ENCODE measurements at regions of chr16 and their contacts with region 1.

Region 1: DNA sequence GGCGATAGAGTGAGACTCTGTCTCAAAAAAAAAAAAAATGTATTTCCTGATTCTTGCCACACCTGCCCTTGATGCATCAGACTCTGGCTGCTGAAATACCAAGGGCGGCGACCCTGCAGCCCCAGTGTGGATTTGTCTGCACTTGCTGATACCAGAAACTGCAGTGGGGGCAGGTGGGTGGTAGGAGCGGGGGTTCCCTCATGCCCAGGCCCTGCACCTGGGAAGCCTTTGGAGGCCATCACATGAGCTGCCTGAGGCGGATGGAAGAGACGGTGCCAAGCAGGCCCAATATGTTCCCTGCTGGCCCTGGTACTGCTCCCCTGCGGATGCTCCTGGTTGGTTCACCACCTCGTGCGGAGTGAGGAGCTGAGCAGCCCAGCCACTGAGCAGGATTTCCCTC is 50.6 kb downstream of the MARF1 start:
- DNase-seq: no peak
- ATAC-seq: no peak
- H3K4me3 ChIP-seq: no peak overlapping the region
- H3K27ac ChIP-seq: peak overlapping the region; percentile 32
- H3K4me1 ChIP-seq: peaks cover 16% of the 10 kb centered on the region
- H3K27me3 ChIP-seq: no peaks in the 10 kb centered on the region
- CTCF ChIP-seq: no peak

Region 2: DNA sequence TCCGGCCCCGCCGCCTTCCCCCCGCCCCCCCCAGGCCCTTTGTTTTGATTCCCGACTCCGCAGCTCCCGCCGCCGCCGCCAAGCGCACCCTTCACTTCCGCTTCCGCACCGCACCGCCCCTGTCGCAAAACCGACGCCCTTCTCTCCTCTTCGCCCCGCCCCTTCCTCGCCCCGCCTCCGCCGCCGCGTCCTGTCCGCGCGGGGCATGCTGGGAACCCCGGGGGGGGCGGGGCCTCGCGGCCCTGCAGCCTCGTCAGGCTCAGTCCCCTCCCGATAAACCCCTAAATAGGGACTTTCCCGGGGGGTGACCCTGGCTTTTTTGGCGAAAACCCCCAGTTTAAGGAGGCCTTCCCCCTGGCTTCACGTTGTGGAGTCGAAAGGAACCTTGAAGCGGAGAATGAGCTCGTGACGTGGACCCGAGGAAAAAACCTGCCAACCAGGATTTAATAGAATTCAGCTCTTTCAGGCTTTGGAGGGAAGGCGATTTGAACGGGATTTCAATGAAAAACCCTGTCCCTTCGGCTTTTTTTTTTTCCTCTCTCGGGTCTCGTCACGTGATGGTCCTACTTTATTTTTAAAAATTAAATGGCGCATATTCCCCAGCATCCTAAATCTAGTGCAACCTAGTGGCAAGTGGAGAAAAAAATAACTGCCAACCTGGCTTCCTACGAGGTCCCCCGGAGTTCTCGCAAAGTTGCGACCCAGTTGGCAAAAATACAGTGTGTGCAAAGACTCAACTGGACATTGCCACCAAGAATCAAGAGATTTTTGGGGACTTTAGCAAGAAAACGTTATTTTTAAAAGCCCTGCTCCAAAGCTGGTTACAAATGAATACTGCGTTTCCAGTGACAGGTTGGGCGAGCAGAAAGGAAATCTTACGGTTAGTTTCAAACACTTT is 51.0 kb after region 1 on chr16 and contains the start of gene MARF1:
- intact Hi-C with region 1: loop called in 1 of 2 experiments (anchors 10 kb)
- DNase-seq: peak; percentile 99 to 100
- ATAC-seq: peak; percentile 96 to 99 (median 96)
- H3K4me3 ChIP-seq: peak within 1 kb of the TSS; percentile 87
- H3K27ac ChIP-seq: peak within 1 kb of the TSS; percentile 99
- H3K4me1 ChIP-seq: peaks cover 26% of the 10 kb centered on the region
- H3K27me3 ChIP-seq: no peaks in the 10 kb centered on the region
- CTCF ChIP-seq: peak; percentile 54
- total RNA-seq, gene MARF1: 41.7 to 91.5 (median 51.3) TPM

Region 3: GRCh38 chr16:16062023-16062932 is 470.0 kb after region 1 on chr16:
- intact Hi-C with region 1: no loop called
- DNase-seq: no peak
- ATAC-seq: peak in 1 of 4 donors; percentile 9
- H3K4me3 ChIP-seq: no peak overlapping the region
- H3K27ac ChIP-seq: peak overlapping the region; percentile 80
- H3K4me1 ChIP-seq: peaks cover 31% of the 10 kb centered on the region
- H3K27me3 ChIP-seq: no peaks in the 10 kb centered on the region
- CTCF ChIP-seq: no peak

Measured in psoas muscle (tissue), 8 donors.